ENCODE measurements at regions of chr1 and their contacts with region 1.

Region 1: GRCh38 chr1:26602378-26602959 is 72.9 kb downstream of the RPS6KA1 start:
- DNase-seq: no peak
- ATAC-seq: no peak
- H3K4me3 Mint-ChIP-seq: no peak overlapping the region
- H3K27ac Mint-ChIP-seq: no peak overlapping the region
- H3K4me1 Mint-ChIP-seq: peaks cover 15% of the 10 kb centered on the region
- H3K27me3 Mint-ChIP-seq: peaks cover 28% of the 10 kb centered on the region

Region 2: GRCh38 chr1:26555550-26556510 is 46.6 kb before region 1 on chr1:
- CTCF ChIA-PET with region 1: no interaction called
- DNase-seq: no peak
- ATAC-seq: no peak
- H3K4me3 Mint-ChIP-seq: no peak overlapping the region
- H3K27ac Mint-ChIP-seq: no peak overlapping the region
- H3K4me1 Mint-ChIP-seq: peaks cover 29% of the 10 kb centered on the region
- H3K27me3 Mint-ChIP-seq: no peaks in the 10 kb centered on the region

Region 3: GRCh38 chr1:26574719-26575251 is 27.7 kb before region 1 on chr1:
- CTCF ChIA-PET with region 1: no interaction called
- DNase-seq: no peak
- ATAC-seq: no peak
- H3K4me3 Mint-ChIP-seq: no peak overlapping the region
- H3K27ac Mint-ChIP-seq: no peak overlapping the region
- H3K4me1 Mint-ChIP-seq: peaks cover 49% of the 10 kb centered on the region
- H3K27me3 Mint-ChIP-seq: no peaks in the 10 kb centered on the region

Region 4: DNA sequence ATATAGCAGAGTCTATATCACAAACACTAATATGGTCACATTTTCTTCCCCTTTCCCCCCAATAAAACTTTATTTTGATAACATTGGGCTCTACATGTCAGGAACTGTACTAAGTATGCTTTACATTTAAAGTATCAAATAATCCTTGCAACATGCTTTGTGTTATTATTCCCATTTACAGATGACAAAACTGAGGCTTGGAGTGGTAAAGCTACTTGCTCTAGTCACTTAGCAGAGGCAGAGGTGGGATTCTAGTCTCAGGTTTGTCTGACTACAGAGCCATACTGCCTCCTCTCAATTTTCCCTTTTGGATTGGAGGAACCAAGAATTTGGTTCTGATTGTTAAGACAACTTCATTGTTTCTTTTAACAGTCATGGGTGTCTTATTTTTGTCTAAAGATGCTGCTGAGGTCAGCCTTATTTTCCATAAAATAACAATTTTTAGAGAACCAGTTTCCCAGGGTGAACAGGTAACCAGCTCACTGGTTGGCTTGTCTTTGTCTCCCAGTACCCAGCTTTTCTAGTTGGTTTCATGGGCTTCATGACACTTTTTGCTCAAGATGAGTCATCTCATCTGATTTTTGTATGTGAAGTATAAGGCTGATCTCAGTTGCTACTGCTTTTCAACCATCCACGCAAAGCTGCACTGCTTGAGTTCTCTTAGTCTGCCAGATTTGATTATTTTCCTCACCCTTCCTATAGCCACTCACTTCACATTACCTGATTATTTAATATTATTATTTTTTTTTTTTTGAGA is 12.4 kb after region 1 on chr1:
- CTCF ChIA-PET with region 1: interaction called, 24 read pairs
- DNase-seq: no peak
- ATAC-seq: no peak
- H3K4me3 Mint-ChIP-seq: no peak overlapping the region
- H3K27ac Mint-ChIP-seq: no peak overlapping the region
- H3K4me1 Mint-ChIP-seq: peaks cover 10% of the 10 kb centered on the region
- H3K27me3 Mint-ChIP-seq: peaks cover 10% of the 10 kb centered on the region

Region 5: DNA sequence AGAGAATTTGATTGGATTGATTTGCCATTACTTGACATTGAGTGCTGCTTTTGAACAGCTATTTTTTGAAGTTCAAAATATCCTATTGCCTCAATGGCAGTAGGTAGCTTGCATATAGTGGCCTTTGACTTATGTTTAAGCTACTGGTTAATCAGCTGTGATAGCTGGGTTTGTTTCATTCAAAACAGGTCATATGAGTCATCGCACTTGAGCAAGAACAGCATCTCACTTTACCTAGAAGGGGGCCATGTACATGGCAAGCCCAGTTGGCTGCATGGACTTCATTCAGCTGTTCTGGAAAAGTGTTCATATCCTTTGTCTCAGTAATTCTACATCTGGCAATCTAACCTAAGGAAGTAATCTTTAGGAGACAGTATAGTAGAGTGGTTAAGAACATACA is 64.4 kb after region 1 on chr1:
- CTCF ChIA-PET with region 1: no interaction called
- DNase-seq: no peak
- ATAC-seq: no peak
- H3K4me3 Mint-ChIP-seq: no peak overlapping the region
- H3K27ac Mint-ChIP-seq: no peak overlapping the region
- H3K4me1 Mint-ChIP-seq: peaks cover 5% of the 10 kb centered on the region
- H3K27me3 Mint-ChIP-seq: peaks cover 2% of the 10 kb centered on the region

Region 6: DNA sequence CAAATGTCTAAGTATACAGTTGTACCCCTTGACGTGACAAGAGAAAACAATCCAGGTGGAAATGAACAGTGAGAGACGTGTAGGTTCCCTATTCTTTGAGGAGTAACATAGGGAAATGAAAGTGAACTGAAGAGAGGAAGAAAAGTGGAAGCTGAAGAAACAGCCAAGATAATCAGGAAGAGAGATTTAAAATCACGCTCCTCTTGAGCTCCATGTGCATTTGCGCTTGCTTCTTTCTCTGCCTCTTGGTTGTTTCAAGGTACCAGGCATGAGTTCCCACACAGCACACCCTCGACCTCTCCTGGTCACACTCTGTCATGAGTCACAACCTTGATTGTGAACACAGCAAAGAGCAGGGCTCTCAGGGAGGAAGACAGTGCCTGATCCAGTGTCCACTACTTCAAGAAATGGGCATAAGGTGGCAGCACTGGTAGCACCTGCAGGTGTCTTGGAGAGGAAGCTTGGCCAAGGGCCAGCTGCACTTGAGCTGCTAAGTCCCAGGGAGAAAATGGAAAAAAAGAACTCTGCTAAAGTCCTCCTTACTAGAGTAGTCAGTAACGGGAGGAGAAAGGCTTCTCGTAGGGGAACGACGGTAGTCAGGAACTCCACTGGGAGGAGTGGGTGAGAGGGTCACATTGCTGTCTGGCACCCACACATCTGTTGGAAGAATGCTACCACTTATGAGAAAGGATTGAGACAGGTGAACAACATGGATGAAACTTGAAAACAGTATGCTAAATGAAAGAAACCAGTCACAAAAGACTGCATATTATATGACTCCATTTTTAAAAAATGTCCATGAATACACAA is 75.0 kb after region 1 on chr1:
- CTCF ChIA-PET with region 1: interaction called, 13 read pairs
- DNase-seq: peak; percentile 70
- ATAC-seq: peak; percentile 98
- H3K4me3 Mint-ChIP-seq: no peak overlapping the region
- H3K27ac Mint-ChIP-seq: peak overlapping the region; percentile 19
- H3K4me1 Mint-ChIP-seq: peaks cover 20% of the 10 kb centered on the region
- H3K27me3 Mint-ChIP-seq: no peaks in the 10 kb centered on the region

Region 7: GRCh38 chr1:26799479-26800142 is 197.1 kb after region 1 on chr1:
- CTCF ChIA-PET with region 1: interaction called, 18 read pairs
- DNase-seq: peak; percentile 63
- ATAC-seq: peak; percentile 76
- H3K4me3 Mint-ChIP-seq: peak overlapping the region; percentile 56
- H3K27ac Mint-ChIP-seq: peak overlapping the region; percentile 97
- H3K4me1 Mint-ChIP-seq: peaks cover 47% of the 10 kb centered on the region
- H3K27me3 Mint-ChIP-seq: no peaks in the 10 kb centered on the region

Region 8: GRCh38 chr1:26864610-26865527 is 262.4 kb after region 1 on chr1:
- CTCF ChIA-PET with region 1: interaction called, 12 read pairs
- DNase-seq: peak; percentile 97
- ATAC-seq: peak; percentile 95
- H3K4me3 Mint-ChIP-seq: peak overlapping the region; percentile 84
- H3K27ac Mint-ChIP-seq: peak overlapping the region; percentile 87
- H3K4me1 Mint-ChIP-seq: peaks cover 29% of the 10 kb centered on the region
- H3K27me3 Mint-ChIP-seq: no peaks in the 10 kb centered on the region

Region 9: GRCh38 chr1:26874896-26875295 is 272.4 kb after region 1 on chr1:
- CTCF ChIA-PET with region 1: interaction called, 20 read pairs
- DNase-seq: no peak
- ATAC-seq: no peak
- H3K4me3 Mint-ChIP-seq: no peak overlapping the region
- H3K27ac Mint-ChIP-seq: peak overlapping the region; percentile 24
- H3K4me1 Mint-ChIP-seq: peaks cover 6% of the 10 kb centered on the region
- H3K27me3 Mint-ChIP-seq: no peaks in the 10 kb centered on the region

Region 10: DNA sequence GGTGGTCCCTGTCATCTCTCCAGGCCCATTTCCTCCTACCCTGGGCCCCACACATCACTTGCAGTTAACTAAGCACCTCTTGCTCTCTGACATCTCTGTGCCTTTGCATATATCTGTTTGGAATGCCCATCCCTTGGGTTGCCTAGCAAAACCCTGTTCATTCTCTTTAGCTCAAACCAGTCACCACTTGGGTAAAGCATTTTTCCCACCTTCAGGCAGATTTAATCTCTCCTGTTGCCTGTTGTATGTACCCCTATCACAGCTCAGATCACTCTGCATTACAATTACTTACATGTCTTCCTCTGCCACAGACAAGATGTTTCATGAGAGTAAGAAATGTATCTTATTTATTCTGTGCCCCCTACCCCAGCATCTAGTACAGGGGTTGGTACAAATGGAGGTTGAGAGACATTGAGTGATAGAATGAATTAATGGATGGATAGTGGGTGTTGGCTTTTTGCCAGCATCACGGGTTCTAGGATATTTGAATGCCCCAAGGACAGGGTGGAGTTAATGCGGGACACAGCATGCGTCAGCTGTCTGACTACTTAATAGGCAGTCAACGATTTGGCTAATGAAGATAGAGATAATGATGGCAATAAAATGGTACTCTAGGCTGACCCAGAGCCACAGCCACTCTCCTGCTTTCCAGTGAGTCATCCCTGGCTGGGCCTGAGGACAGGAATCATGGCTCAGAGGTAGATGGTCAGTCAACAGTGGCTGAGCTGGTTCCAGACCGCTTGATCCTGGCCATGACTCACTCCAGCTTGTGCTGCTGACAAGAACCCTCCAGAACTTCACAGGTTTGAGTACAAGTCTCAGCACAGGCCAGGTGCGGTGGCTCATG is 304.8 kb after region 1 on chr1:
- CTCF ChIA-PET with region 1: no interaction called
- DNase-seq: no peak
- ATAC-seq: no peak
- H3K4me3 Mint-ChIP-seq: no peak overlapping the region
- H3K27ac Mint-ChIP-seq: no peak overlapping the region
- H3K4me1 Mint-ChIP-seq: no peaks in the 10 kb centered on the region
- H3K27me3 Mint-ChIP-seq: peaks cover 3% of the 10 kb centered on the region

Measured in activated CD8-positive, alpha-beta memory T cell treated with anti-CD3 and anti-CD28 coated beads, Interleukin-2, amount 10 ng/mL, durations not matched to agents 7 days and 5 days (primary cell).